Sciatic nerve (tissue), 2 donors: ENCODE measurements at regions of chr7 and their contacts with region 1.

Region 1: GRCh38 chr7:20892776-20893175 is 106.1 kb upstream of the SP8 start:
- DNase-seq: no peak
- ATAC-seq: no peak

Region 2: DNA sequence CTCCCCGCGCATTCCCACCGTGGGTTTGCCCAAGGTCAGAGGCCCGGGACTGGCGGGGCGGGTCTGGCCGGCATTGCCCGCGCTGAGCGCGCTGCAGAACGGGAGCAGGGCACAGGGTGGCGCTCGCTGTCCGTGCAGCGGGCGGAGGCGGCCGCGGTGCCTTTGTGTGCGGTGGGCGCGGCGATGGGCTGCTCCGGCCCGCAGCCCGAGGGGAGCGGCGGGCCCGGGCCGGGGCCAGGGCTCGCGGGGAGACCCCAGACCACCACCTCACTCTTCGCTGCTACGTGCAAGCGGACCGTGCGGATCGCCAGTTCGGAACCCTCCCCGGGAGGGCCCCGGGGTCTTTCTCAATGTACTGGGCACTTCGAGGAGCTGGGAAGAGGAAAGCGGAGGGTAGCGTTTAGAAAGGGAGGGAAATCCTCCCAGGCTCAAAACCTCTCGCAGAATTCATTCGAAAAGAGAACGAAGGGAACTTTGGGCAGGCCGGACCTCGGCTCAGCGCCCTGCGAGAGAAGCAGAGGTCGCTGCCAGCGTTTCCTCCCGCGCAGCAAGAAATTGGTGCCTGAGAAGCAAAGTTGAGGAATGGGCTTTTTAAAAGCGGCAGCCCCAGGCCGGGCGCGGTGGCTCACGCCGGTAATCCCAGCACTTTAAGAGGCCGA is 114.6 kb before region 1 on chr7:
- intact Hi-C with region 1: no loop called
- DNase-seq: no peak
- ATAC-seq: peak; percentile 64

Region 3: DNA sequence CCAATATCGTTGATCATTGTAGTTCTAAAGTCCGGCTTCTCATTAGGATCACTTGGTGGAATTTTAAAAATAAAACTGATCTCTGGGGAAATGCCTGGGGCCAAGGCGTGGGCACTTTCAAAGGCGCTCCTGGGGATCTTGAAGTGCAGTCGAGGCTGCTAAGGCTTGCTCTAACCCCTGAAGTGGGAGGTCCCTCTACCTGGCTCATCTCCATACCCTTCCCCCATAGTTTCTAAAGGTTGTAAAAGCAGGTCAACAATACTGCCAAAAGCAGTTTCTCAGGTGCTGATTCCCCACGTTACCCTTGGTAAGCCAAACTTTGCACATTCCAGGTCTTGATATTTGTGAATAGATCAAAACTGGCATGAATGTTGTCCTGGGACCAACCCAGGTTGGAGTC is 27.1 kb before region 1 on chr7:
- intact Hi-C with region 1: loop called (anchors 2 kb)
- DNase-seq: no peak
- ATAC-seq: no peak

Region 4: DNA sequence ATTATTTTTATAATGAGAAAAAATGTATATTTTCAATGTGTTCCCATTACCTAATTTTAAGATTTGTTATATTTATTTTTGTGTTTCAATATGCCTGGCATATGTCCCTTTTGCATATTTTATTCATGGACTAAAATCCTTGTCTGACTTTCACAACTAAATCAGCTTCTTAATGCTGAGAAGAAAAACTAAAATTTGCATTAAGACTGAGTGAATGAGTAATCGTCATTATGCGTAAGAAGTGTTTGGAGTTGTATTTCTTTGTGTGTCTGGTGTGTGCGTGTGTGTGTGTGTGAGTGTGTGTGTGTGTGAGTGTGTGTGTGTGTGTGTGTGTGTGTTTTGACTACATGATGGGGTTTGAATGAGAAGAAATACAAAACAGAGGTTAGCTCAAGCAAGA is 95.6 kb after region 1 on chr7:
- intact Hi-C with region 1: no loop called
- DNase-seq: no peak
- ATAC-seq: no peak

Region 5: DNA sequence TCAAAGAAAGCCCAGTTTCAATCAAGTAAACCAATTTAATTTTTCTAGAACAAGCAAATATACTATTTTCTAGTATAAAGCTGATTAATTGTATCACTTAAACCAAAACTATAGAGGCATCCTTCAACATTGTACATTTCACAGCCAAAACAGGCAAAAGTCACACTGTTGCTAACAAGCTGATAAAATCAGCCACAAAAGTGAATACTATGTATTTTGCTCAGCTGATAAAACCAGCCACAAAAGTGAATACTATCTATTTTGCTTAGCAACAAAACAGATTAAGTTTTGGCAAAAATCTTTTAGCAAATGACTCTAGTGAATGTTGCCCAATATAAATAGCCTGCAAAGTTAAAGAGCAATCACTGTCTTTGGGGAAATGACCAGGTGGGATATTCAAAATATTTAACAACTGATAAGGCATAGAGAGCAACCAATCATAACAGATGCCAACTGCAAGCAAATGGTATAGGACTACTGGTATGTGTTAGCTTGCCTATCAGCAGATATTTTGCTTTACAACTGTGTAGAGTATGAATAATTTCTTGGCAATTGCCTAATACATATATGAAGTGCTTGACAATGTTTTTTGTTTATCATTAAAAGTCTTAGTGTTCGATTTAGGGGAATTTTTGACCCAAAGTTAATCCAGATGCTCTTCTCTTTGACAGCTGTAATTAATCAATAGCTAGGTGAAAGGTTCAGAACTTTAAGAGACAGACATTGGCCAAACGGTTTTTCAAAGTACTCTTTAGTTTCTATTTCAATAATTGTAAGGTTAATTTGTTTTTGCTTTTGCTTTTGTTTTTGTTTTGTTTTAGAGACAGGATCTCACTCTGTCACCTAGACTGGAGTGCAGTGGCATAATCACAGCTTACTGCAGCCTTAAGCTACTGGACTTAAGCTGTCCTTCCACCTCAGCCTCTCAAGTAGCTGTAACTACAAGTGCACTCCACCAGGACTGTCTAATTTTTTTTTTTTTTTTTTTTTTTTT is 490.7 kb after region 1 on chr7:
- intact Hi-C with region 1: no loop called
- DNase-seq: no peak
- ATAC-seq: no peak